Right lobe of liver (tissue), 6 donors: ENCODE measurements at regions of chr11 and their contacts with region 1.

Region 1: DNA sequence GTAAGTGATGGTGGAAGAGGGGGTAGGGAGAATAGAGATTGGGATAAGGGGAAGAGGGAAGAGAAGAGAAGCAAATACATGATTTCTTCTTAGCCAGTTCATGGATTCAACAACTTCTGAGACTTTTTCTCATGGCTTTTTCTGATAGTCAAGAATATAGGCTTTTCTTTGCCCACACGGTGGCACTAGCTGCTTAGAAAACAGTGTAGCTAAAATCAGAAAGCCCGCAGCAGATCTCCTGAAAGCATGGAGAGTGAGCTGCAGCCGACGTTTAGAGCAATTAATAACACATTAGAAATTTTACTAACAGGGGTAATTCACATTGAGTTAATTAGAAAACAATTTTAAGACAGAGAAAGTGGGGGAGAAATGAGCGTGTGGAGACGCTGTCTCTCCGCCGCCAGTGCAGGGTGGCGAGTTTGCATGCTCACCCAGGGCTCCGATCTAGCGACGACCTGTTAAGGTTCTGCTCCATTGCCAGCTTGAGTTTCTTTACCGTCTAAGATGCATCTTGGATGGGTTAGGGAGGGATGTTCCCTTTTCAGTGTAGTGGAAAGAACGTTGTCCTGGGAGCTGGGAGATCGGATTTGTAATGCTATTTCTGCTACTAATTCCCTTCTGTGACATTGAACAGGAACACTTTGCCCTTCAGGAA is 3.3 kb upstream of the RAG1 start:
- DNase-seq: peak in 1 of 3 donors; percentile 56
- ATAC-seq: peak; percentile 91 to 96 (median 94)
- H3K4me3 ChIP-seq: peak overlapping the region in 2 of 3 donors; percentile 21 to 46
- H3K27ac ChIP-seq: no peak overlapping the region
- H3K4me1 ChIP-seq: no peaks in the 10 kb centered on the region
- H3K27me3 ChIP-seq: no peaks in the 10 kb centered on the region
- CTCF ChIP-seq: peak; percentile 71 to 80 (median 75)
- POLR2A ChIP-seq: no peak

Region 2: DNA sequence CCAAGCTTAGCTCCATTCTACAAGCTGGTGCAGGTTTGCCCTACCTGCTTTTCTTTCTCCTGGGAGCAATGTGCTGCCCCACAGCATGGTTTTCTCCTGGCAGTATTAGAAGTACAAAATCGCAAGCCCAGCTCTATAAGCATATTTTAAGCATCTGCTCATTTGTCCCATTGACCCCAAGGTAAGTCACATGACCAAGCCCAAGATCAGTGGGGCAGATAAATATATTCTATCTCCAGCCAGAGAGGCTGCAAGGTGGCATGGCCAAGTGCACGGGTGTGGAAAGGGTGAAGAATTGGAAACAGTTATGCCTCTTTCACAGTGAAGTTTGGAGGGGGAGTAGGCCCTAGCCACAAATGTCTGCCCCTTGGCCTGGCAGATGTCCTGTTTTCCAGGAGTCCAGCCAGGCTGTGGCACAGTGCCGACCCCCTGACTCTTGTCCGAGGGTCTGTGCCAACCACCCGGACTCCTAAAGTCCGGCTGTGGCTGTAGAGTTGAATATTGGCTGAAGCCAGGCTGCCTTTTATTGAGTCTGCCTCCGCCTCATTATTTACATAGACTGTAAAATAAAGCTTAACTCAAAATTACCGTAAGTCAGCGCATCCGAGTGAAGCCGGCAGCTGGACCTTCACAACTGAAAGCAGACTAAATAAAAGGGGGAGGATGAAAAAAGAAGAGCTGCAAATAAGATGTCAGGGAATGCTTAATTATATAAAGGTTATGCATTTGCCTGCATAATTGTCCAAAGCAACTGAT is 441.0 kb before region 1 on chr11:
- intact Hi-C with region 1: no loop called
- DNase-seq: no peak
- ATAC-seq: no peak
- H3K4me3 ChIP-seq: no peak overlapping the region
- H3K27ac ChIP-seq: no peak overlapping the region
- H3K4me1 ChIP-seq: peaks cover 0 to 3% (median 0%) of the 10 kb centered on the region in 4 donors
- H3K27me3 ChIP-seq: no peaks in the 10 kb centered on the region
- CTCF ChIP-seq: no peak
- POLR2A ChIP-seq: no peak

Region 3: GRCh38 chr11:36672813-36673450 is 108.4 kb after region 1 on chr11:
- intact Hi-C with region 1: loop called (anchors 10 kb)
- DNase-seq: no peak
- ATAC-seq: peak; percentile 58 to 65 (median 60)
- H3K4me3 ChIP-seq: no peak overlapping the region
- H3K27ac ChIP-seq: no peak overlapping the region
- H3K4me1 ChIP-seq: no peaks in the 10 kb centered on the region
- H3K27me3 ChIP-seq: no peaks in the 10 kb centered on the region
- CTCF ChIP-seq: peak; percentile 74 to 87 (median 82)
- POLR2A ChIP-seq: no peak